ENCODE measurements at regions of chr5 and their contacts with region 1.

Region 1: GRCh38 chr5:139215107-139215975 is 17.2 kb upstream of the SIL1 start:
- DNase-seq: no peak
- ATAC-seq: no peak
- H3K4me3 Mint-ChIP-seq: no peak overlapping the region
- H3K27ac Mint-ChIP-seq: no peak overlapping the region
- H3K4me1 Mint-ChIP-seq: no peaks in the 10 kb centered on the region
- H3K27me3 Mint-ChIP-seq: peaks cover 1% of the 10 kb centered on the region
- CTCF ChIP-seq: no peak

Region 2: DNA sequence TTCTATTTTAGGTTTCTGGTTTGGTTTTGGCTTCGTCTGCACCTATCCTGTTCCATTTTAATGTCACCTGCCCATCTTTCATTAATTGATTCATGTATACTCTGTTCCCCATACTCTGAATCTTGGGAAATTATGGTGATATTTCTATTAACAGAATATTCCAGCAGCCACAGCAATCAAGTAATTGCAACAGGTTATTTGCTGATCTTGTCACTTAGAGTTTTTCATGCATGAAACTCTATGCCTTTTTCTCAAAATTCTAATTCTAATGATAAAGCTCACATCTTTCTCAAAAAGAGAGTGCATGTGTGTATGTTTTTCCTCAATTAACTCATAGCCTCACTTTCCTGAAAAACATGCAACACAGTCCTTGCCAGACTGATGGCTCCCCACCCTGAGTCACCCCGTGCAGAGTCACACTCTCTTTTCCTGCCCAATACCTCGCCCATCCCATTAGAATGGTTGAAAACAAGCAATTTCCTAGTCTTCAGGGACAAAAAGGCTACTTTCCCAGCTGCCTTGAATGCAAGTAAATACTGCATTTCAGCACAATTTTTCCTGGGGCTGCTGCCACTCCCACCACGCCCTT is 956.5 kb before region 1 on chr5:
- CTCF ChIA-PET with region 1: no interaction called
- POLR2A ChIA-PET with region 1: no interaction called
- intact Hi-C with region 1: no loop called
- DNase-seq: no peak
- ATAC-seq: no peak
- H3K4me3 Mint-ChIP-seq: no peak overlapping the region
- H3K27ac Mint-ChIP-seq: no peak overlapping the region
- H3K4me1 Mint-ChIP-seq: no peaks in the 10 kb centered on the region
- H3K27me3 Mint-ChIP-seq: peaks cover 2% of the 10 kb centered on the region
- CTCF ChIP-seq: no peak

Region 3: DNA sequence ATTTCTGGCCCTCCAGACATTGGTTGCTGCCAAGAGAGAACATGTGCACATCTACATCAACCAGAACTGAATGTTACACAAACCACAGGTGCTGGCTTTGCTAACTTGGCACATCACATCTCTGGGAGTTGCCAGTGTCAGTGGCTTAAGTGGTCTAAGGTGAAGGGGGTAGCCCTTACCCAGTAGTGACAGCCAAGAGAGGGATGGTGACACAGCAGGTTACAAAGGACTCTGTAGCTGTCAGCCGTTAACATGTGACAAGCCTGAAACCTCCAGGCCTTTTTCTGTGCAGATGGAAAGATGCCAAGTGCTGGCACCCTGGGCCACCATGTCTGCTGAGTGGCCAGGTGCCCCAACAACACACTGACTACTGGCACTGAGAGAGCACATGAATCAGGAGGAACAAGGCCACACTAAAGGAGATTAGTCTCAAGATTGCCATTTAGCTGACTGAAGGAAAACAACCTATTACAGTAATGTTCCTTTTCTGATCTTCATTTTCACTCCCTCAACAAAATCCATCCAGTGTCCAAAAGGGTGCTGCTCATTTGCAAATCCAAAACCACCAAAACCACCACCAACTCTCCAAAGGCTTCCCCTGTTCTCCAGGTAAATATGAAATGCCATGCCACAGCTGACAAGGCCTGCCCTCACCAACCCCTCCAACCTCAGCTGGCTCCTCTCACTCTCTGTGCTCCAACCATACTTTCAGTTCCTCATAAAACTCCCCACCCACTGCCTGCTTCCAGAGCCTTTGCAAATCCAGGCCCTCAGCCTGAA is 37.3 kb before region 1 on chr5:
- CTCF ChIA-PET with region 1: no interaction called
- POLR2A ChIA-PET with region 1: no interaction called
- intact Hi-C with region 1: no loop called
- DNase-seq: no peak
- ATAC-seq: peak; percentile 47
- H3K4me3 Mint-ChIP-seq: peak overlapping the region; percentile 33
- H3K27ac Mint-ChIP-seq: peak overlapping the region; percentile 36
- H3K4me1 Mint-ChIP-seq: peaks cover 54% of the 10 kb centered on the region
- H3K27me3 Mint-ChIP-seq: no peaks in the 10 kb centered on the region
- CTCF ChIP-seq: no peak

Region 4: DNA sequence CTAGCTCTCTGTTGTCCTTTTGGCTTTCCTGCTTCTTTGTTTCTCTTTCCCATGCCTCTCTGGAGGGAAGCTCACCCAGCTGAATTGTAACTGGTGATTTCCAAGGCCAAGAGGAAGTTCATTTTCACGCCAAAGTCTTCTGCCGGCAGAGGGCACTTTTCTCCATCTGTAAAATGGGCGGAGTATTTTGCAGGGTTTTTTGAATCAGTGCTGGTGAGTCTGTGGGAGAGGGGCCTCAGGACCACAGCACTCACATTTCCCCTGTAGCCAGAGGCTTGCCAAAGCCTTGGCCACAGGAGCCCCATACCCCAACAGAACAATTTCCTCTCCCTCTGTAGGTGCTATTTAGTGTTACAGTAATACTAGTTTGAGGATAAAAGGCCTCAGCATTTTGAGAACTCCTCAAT is 35.9 kb after region 1 on chr5:
- CTCF ChIA-PET with region 1: no interaction called
- POLR2A ChIA-PET with region 1: no interaction called
- intact Hi-C with region 1: loop called (anchors 5 kb)
- DNase-seq: no peak
- ATAC-seq: peak; percentile 50
- H3K4me3 Mint-ChIP-seq: no peak overlapping the region
- H3K27ac Mint-ChIP-seq: no peak overlapping the region
- H3K4me1 Mint-ChIP-seq: peaks cover 5% of the 10 kb centered on the region
- H3K27me3 Mint-ChIP-seq: no peaks in the 10 kb centered on the region
- CTCF ChIP-seq: no peak